ENCODE measurements at regions of chr7 and their contacts with region 1.

Region 1: DNA sequence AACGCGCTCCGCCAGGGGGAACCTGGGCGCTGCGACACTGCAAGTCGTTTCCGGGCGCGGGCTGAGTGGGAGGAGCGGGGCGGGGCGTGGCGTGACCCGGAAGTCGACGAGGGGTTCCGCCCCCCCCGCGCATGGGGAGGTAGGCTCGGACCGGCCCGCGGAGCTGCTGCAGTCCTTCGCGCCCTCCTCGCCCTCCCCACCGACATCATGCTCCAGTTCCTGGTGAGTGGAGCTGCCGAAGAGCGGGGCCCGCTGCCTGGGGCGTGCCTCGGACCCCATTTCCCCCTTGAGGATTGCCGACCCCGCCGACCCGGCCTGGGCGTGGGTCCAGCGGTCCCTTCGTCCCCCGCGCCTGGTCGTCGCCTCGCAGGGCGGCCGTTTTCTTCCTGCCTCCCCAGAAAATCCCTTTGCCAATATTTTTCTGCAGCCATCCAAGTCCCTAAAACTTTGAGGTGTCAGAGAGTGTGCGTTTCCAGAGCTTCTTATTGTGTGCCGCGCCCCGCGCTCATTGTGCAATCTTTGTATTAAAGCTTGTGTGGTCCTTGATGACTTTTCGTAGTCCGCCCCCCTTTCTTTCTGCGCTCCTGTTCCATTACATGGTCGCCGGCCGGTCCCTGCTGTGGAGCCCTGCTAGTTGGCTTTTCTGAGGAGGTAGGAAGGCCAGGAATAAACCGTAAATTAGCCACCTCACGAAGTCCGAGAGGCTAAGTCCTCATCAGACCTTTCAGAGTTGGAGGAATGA is at the start of gene STMP1:
- DNase-seq: peak; percentile 98 to 100 (median 99)
- ATAC-seq: peak; percentile 87
- H3K4me3 ChIP-seq: peak within 1 kb of the TSS; percentile 82
- H3K27ac ChIP-seq: peak within 1 kb of the TSS; percentile 85
- H3K4me1 ChIP-seq: peaks cover 22 to 33% of the 10 kb centered on the region in 2 experiments
- H3K27me3 ChIP-seq: no peaks in the 10 kb centered on the region
- CTCF ChIP-seq: peak; percentile 74 to 81 (median 77); a peak in 5 of 6 replicates
- EP300 ChIP-seq: peak; percentile 58
- POLR2A ChIP-seq: peak; percentile 99
- RAD21 ChIP-seq: peak; percentile 56 to 64
- polyA plus RNA-seq, gene STMP1: 175 to 249 TPM

Region 2: GRCh38 chr7:134646425-134647305 is 1015.9 kb before region 1 on chr7 and contains the start of gene BPGM:
- CTCF ChIA-PET with region 1: no interaction called
- POLR2A ChIA-PET with region 1: no interaction called
- in situ Hi-C with region 1: no loop called
- intact Hi-C with region 1: loop called (anchors 10 kb)
- DNase-seq: peak; percentile 99 to 100 (median 100)
- ATAC-seq: peak; percentile 99
- H3K4me3 ChIP-seq: peak within 1 kb of the TSS; percentile 62
- H3K27ac ChIP-seq: peak within 1 kb of the TSS; percentile 58
- H3K4me1 ChIP-seq: peaks cover 0 to 4% of the 10 kb centered on the region in 2 experiments; a peak in 2 of 5 replicates
- H3K27me3 ChIP-seq: no peaks in the 10 kb centered on the region
- CTCF ChIP-seq: peak; percentile 63 to 71 (median 66)
- EP300 ChIP-seq: no peak; the same call in none of the 2 replicates
- POLR2A ChIP-seq: peak; percentile 97
- RAD21 ChIP-seq: no peak
- polyA plus RNA-seq, gene BPGM: 33.0 to 46.1 TPM

Region 3: GRCh38 chr7:134804351-134804750 is 858.2 kb before region 1 on chr7:
- CTCF ChIA-PET with region 1: no interaction called
- POLR2A ChIA-PET with region 1: no interaction called
- in situ Hi-C with region 1: no loop called
- intact Hi-C with region 1: no loop called
- DNase-seq: no peak
- ATAC-seq: no peak
- H3K4me3 ChIP-seq: no peak overlapping the region
- H3K27ac ChIP-seq: no peak overlapping the region
- H3K4me1 ChIP-seq: no peaks in the 10 kb centered on the region
- H3K27me3 ChIP-seq: peaks cover 2 to 7% of the 10 kb centered on the region in 2 experiments; a peak in 3 of 5 replicates
- CTCF ChIP-seq: no peak
- EP300 ChIP-seq: no peak
- POLR2A ChIP-seq: no peak
- RAD21 ChIP-seq: no peak

Region 4: GRCh38 chr7:135645296-135645904 is 17.1 kb before region 1 on chr7:
- CTCF ChIA-PET with region 1: no interaction called
- POLR2A ChIA-PET with region 1: interaction called, 24 read pairs
- in situ Hi-C with region 1: no loop called
- intact Hi-C with region 1: no loop called
- DNase-seq: peak; percentile 42 to 61 (median 52)
- ATAC-seq: peak; percentile 81
- H3K4me3 ChIP-seq: no peak overlapping the region
- H3K27ac ChIP-seq: no peak overlapping the region
- H3K4me1 ChIP-seq: peaks cover under 1 to 6% of the 10 kb centered on the region in 2 experiments; a peak in 2 of 5 replicates
- H3K27me3 ChIP-seq: no peaks in the 10 kb centered on the region
- CTCF ChIP-seq: peak; percentile 64 to 82 (median 70); a peak in 5 of 6 replicates
- EP300 ChIP-seq: no peak
- POLR2A ChIP-seq: no peak
- RAD21 ChIP-seq: peak; percentile 69 to 72

Region 5: DNA sequence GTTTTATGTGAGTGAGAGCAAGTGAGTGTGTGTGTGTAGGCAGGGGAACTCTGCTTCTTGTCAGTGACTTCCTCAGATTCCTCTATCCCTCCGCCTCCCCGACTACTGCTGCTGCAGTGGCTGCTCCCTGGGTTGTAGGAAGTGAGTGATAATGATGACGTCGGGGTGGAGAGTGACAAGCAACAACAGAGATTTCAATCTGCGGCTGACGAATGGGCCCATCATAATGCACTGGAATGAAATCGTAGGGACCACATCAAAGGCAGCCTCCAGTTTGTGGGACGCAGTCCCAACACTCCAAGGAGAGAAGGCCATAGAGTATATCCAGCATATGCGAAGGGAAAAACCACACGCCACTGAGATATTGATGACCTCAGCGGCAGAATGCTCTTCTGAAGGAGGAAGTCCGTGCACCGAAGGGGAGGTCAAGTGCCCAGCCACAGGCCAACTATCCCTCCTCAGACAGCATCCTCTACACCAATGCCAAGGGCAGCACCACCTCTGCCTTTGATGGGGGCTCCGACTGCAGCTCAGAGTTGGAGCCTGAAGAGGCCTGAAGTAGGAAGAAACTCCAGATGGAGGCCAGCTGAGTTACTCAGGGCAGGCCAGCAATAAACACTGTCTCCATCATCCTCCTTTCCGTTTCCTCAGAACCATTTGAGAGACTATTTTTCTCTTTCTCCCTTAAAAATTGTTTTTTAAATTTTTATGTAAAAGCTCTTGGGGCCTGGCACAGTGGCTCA is 11.5 kb before region 1 on chr7:
- CTCF ChIA-PET with region 1: no interaction called
- POLR2A ChIA-PET with region 1: interaction called, 10 read pairs
- in situ Hi-C with region 1: no loop called
- intact Hi-C with region 1: no loop called
- DNase-seq: peak in 2 of 4 experiments; percentile 70 to 83
- ATAC-seq: peak; percentile 89
- H3K4me3 ChIP-seq: no peak overlapping the region
- H3K27ac ChIP-seq: peak overlapping the region; percentile 38; the same call in 2 of the 3 replicates
- H3K4me1 ChIP-seq: peaks cover 12 to 14% of the 10 kb centered on the region in 2 experiments; a peak in 4 of 5 replicates
- H3K27me3 ChIP-seq: no peaks in the 10 kb centered on the region
- CTCF ChIP-seq: no peak
- EP300 ChIP-seq: peak; percentile 47; the same call in 1 of the 2 replicates
- POLR2A ChIP-seq: no peak
- RAD21 ChIP-seq: no peak

Region 6: DNA sequence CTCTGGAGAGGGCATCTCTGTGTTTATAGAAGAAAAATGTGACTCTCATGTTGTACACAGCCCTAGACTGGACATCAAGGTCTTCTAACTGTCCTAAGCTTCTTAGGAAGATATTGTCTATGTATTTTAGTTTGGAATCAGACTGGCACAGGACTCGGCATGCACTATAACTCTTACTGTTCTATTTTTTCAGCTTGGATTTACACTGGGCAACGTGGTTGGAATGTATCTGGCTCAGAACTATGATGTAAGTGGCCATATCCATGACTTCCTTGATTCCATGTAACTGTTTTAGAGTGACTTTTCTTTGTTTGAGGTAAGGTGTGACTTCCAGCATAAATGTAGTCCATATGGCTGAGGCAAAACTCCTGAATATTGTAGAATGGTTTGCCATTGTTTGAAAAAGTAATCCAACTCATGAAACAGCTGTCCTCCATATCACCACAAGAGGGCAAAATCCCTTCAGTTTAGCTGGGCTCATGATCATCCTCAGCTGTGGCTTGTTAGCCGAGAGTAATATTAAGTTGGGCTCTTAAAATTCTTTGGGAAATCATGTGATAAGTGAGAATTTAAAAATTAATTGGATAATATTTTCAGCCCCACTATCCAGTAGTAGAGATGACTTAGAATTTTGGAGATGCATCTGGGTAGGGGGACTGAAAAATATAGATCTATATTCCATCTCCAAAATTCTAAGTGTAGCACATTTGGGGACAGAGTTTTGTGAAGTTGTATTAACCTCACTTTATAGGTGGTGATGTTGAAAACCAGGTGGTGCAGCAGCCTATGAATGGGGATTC is 10.2 kb after region 1 on chr7:
- CTCF ChIA-PET with region 1: no interaction called
- POLR2A ChIA-PET with region 1: interaction called, 71 read pairs
- in situ Hi-C with region 1: no loop called
- intact Hi-C with region 1: no loop called
- DNase-seq: peak; percentile 64 to 78 (median 69)
- ATAC-seq: peak; percentile 91
- H3K4me3 ChIP-seq: no peak overlapping the region
- H3K27ac ChIP-seq: no peak overlapping the region
- H3K4me1 ChIP-seq: peaks cover 0 to 3% of the 10 kb centered on the region in 2 experiments; a peak in 1 of 5 replicates
- H3K27me3 ChIP-seq: no peaks in the 10 kb centered on the region
- CTCF ChIP-seq: peak; percentile 82 to 92 (median 89)
- EP300 ChIP-seq: no peak; the same call in 1 of the 2 replicates
- POLR2A ChIP-seq: no peak
- RAD21 ChIP-seq: peak; percentile 79 to 80

Measured in K562 (cell line).